H1 (cell line): ENCODE measurements at regions of chr10 and their contacts with region 1.

Region 1: DNA sequence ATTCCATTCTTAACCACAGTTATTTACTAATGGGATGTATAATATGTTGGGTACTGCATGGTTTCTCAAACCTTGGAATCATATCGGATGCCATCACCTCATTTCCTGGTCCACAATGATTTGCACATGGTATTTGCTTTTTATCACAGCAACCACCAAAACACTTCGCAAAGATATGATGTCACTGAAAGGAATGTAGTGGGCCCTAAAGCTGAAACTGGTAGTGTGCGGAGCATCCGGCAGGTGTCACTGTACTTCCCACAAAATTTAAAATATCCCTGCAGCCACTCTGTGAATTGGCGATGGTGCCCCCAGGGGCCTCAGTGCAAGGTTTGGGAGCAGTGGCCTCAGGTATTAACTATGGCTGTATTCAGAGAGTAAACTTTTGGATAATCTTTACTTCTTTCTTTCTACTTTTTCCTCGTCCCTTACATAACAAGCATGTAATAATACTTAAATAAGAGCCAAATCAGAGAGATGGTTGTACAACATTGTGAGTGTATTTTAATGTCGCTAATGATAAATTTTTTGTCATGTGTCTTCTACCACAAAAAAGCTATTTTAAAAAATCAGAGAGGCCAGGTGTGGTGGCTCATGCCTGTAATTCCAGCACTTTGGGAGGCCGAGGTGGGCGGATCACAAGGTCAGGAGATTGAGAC is 66.2 kb downstream of the FAM241B start:
- DNase-seq: peak; percentile 23 to 58
- H3K4me3 ChIP-seq: no peak overlapping the region
- H3K27ac ChIP-seq: no peak overlapping the region
- H3K4me1 ChIP-seq: no peaks in the 10 kb centered on the region
- H3K27me3 ChIP-seq: no peaks in the 10 kb centered on the region; a peak in 1 of 7 replicates
- CTCF ChIP-seq: peak; percentile 43 to 73 (median 61)
- EP300 ChIP-seq: no peak
- POLR2A ChIP-seq: no peak
- RAD21 ChIP-seq: peak; percentile 45 to 60; a peak in 3 of 4 replicates

Region 2: GRCh38 chr10:69684020-69684980 is 11.9 kb before region 1 on chr10:
- CTCF ChIA-PET with region 1: interaction called, 86 read pairs
- POLR2A ChIA-PET with region 1: no interaction called
- DNase-seq: no peak
- H3K4me3 ChIP-seq: no peak overlapping the region
- H3K27ac ChIP-seq: no peak overlapping the region
- H3K4me1 ChIP-seq: peaks cover 0 to 6% (median 3%) of the 10 kb centered on the region in 4 experiments; a peak in 4 of 7 replicates
- H3K27me3 ChIP-seq: no peaks in the 10 kb centered on the region
- CTCF ChIP-seq: no peak
- EP300 ChIP-seq: no peak
- POLR2A ChIP-seq: no peak
- RAD21 ChIP-seq: no peak

Region 3: GRCh38 chr10:69710008-69710888 is 14.0 kb after region 1 on chr10:
- CTCF ChIA-PET with region 1: interaction called, 260 read pairs
- POLR2A ChIA-PET with region 1: interaction called, 3 read pairs
- DNase-seq: no peak
- H3K4me3 ChIP-seq: no peak overlapping the region
- H3K27ac ChIP-seq: no peak overlapping the region
- H3K4me1 ChIP-seq: peaks cover 4 to 11% (median 8%) of the 10 kb centered on the region in 4 experiments; a peak in 6 of 7 replicates
- H3K27me3 ChIP-seq: no peaks in the 10 kb centered on the region
- CTCF ChIP-seq: no peak
- EP300 ChIP-seq: no peak
- POLR2A ChIP-seq: no peak
- RAD21 ChIP-seq: no peak

Region 4: GRCh38 chr10:69728335-69728870 is 32.2 kb after region 1 on chr10:
- CTCF ChIA-PET with region 1: interaction called, 12 read pairs
- POLR2A ChIA-PET with region 1: no interaction called
- DNase-seq: peak in 1 of 2 experiments; percentile 33
- H3K4me3 ChIP-seq: no peak overlapping the region
- H3K27ac ChIP-seq: no peak overlapping the region
- H3K4me1 ChIP-seq: peaks cover 0 to 10% (median 4%) of the 10 kb centered on the region in 4 experiments; a peak in 4 of 7 replicates
- H3K27me3 ChIP-seq: no peaks in the 10 kb centered on the region; a peak in 1 of 7 replicates
- CTCF ChIP-seq: no peak
- EP300 ChIP-seq: no peak
- POLR2A ChIP-seq: no peak
- RAD21 ChIP-seq: no peak

Region 5: GRCh38 chr10:69855346-69856111 is 159.3 kb after region 1 on chr10:
- CTCF ChIA-PET with region 1: no interaction called
- POLR2A ChIA-PET with region 1: no interaction called
- DNase-seq: no peak
- H3K4me3 ChIP-seq: no peak overlapping the region
- H3K27ac ChIP-seq: no peak overlapping the region
- H3K4me1 ChIP-seq: peaks cover 8 to 26% (median 16%) of the 10 kb centered on the region in 4 experiments
- H3K27me3 ChIP-seq: no peaks in the 10 kb centered on the region; a peak in 1 of 7 replicates
- CTCF ChIP-seq: no peak
- EP300 ChIP-seq: no peak
- POLR2A ChIP-seq: no peak
- RAD21 ChIP-seq: no peak